Activated T-helper 1 cell treated with anti-CD3 and anti-CD28 coated beads, Interleukin-12 subunit alpha, Interleukin-12 subunit beta, Interleukin-2, Interleukin-4 antibody, amounts not matched to agents 30 ng/mL and 10 ng/mL and 1 ng/mL, durations not matched to agents 14 hours and 24 hours and 36 hours (primary cell): ENCODE measurements at regions of chr18 and their contacts with region 1.

Region 1: GRCh38 chr18:63224630-63225029 is 94.9 kb downstream of the BCL2 start:
- DNase-seq: no peak
- H3K4me3 Mint-ChIP-seq: no peak overlapping the region
- H3K27ac Mint-ChIP-seq: peak overlapping the region; percentile 45
- H3K4me1 Mint-ChIP-seq: peaks cover 66% of the 10 kb centered on the region
- H3K27me3 Mint-ChIP-seq: no peaks in the 10 kb centered on the region

Region 2: GRCh38 chr18:63234841-63235240 is 10.2 kb after region 1 on chr18:
- intact Hi-C with region 1: loop called (anchors 1 kb)
- DNase-seq: no peak
- H3K4me3 Mint-ChIP-seq: peak overlapping the region; percentile 2
- H3K27ac Mint-ChIP-seq: peak overlapping the region; percentile 70
- H3K4me1 Mint-ChIP-seq: peaks cover 76% of the 10 kb centered on the region
- H3K27me3 Mint-ChIP-seq: no peaks in the 10 kb centered on the region